Breast epithelium (tissue), 4 donors: ENCODE measurements at regions of chr22 and their contacts with region 1.

Region 1: GRCh38 chr22:25461301-25461700 is 103.2 kb upstream of the GRK3 start:
- DNase-seq: no peak
- H3K4me3 ChIP-seq: no peak overlapping the region
- H3K27ac ChIP-seq: no peak overlapping the region
- H3K4me1 ChIP-seq: no peaks in the 10 kb centered on the region
- H3K27me3 ChIP-seq: no peaks in the 10 kb centered on the region
- CTCF ChIP-seq: no peak
- POLR2A ChIP-seq: no peak

Region 2: DNA sequence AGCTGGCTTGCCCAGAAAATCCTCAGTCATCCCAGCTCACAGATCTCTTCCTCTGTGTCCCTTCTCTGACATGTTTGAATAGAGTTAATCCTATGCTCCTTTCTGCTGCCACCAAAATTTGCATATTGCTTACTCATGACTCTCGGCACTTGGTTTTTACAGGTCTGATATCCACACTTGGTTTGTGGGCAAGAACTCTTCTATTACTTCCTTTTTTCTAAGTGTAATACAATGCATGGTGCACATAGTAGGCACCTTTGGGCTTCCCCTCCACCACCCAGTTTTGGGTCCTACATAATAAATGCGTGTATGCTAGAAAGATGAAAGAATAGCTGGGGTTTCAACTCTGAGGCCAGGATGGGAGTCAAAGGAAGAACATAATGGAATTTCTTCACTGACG is 33.5 kb after region 1 on chr22:
- intact Hi-C with region 1: no loop called
- DNase-seq: no peak
- H3K4me3 ChIP-seq: no peak overlapping the region
- H3K27ac ChIP-seq: no peak overlapping the region
- H3K4me1 ChIP-seq: no peaks in the 10 kb centered on the region
- H3K27me3 ChIP-seq: no peaks in the 10 kb centered on the region
- CTCF ChIP-seq: no peak
- POLR2A ChIP-seq: no peak

Region 3: DNA sequence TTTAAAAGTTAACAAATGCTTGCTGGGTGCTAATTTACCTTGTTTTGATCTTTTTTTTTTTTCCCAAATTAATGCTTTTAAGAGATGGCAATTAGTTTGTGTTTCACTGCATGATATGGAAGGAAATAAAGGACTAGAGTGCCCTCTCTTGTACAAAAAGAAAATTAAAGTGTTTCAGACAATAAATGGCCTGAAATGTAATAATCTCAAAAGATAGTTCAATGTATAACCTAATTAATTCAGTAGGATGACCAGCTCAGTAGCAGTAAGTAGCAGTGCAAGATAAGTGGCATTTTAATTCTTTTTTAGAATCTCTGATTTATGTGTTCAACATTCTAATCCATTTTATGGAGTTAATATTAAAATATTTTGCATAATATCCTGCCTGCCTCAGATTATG is 240.7 kb after region 1 on chr22:
- intact Hi-C with region 1: loop called (anchors 5 kb)
- DNase-seq: no peak
- H3K4me3 ChIP-seq: no peak overlapping the region
- H3K27ac ChIP-seq: no peak overlapping the region
- H3K4me1 ChIP-seq: peaks cover 0 to 2% of the 10 kb centered on the region in 2 donors
- H3K27me3 ChIP-seq: no peaks in the 10 kb centered on the region
- CTCF ChIP-seq: peak in 2 of 3 donors; percentile 38 to 41
- POLR2A ChIP-seq: no peak

Region 4: GRCh38 chr22:26364066-26365015 is 903.0 kb after region 1 on chr22:
- intact Hi-C with region 1: no loop called
- DNase-seq: peak in 1 of 2 donors; percentile 24
- H3K4me3 ChIP-seq: no peak overlapping the region
- H3K27ac ChIP-seq: no peak overlapping the region
- H3K4me1 ChIP-seq: no peaks in the 10 kb centered on the region
- H3K27me3 ChIP-seq: peaks cover 0 to 3% of the 10 kb centered on the region in 2 donors
- CTCF ChIP-seq: peak in 2 of 3 donors; percentile 31 to 35
- POLR2A ChIP-seq: no peak